ENCODE measurements at regions of chr2 and their contacts with region 1.

Region 1: DNA sequence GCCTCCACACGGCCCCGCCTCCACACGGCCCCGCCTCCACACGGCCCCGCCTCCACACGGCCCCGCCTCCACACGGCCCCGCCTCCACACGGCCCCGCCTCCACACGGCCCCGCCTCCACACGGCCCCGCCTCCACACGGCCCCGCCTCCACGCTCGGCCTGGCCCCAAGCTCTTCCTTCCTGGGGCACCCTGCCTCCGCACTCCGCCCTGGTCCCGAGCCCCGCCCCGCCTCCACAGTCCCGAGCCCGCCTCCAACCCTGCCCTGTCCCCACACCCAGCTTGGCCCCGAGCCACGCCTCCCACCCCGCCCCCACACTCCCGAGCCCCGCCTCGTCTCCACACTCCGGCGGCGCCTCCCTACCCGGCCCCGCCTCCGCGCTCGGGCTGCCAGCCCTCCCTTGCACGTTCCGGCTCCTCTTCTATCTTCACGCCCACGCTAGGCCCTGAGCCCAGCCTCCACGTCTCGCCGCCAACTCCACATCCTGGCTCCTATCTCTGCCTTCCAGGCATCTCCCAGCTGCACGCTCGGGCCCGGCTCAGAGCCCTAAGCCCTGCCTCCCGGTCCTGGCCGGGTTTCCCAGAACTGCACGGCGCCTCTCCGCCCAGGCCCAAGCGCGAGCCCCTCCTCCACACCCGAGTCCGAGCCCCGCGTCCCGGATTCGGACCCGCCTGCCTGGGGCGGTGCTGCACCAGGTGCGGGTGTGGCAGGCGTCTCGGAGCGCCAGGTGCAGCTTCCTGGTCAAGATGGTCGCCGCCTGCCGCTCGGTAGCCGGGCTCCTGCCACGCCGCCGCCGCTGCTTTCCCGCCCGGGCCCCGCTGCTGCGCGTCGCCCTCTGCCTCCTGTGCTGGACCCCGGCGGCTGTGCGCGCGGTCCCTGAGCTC is at the start of gene TMEM87B:
- DNase-seq: peak; percentile 99
- H3K4me3 Mint-ChIP-seq: peak within 1 kb of the TSS; percentile 96
- H3K27ac Mint-ChIP-seq: peak within 1 kb of the TSS; percentile 98
- H3K4me1 Mint-ChIP-seq: peaks cover 39% of the 10 kb centered on the region
- H3K27me3 Mint-ChIP-seq: no peaks in the 10 kb centered on the region
- total RNA-seq, gene TMEM87B: 22.3 to 24.1 TPM

Region 2: DNA sequence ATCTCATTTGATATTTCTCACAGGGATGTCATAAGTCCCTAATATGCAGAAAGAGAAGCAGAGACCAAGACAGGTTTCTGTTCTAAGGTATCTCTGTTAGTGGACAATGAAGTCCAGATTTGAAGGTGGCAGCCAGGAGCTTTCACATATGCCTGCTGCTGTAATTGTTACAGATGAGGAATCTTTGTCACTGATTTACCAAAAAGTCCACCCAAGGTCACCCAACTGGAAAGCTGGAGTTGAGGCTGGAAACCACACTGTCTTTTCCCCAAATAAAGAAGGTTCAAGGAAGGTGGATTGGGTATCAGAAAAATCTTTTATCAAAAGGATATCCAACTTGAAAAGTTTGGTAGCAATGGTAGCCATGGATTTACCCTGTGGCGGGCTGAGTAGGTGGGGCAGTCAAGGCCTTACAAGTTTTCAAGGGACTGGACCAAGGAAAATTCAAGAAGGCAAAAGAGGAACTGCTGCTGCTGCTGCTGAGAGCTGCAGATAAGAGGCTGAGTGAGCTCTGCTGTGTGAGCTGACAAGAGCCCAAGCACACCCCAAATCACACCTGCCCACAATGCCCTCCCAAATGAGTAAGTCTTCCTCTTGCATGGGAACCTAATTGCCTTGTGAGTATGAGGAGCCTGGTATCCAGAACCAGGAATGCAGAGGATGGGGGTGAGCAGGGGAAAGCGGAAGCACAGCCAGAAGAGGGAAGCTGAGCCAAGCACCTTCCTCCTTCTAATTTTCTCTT is 412.3 kb before region 1 on chr2:
- CTCF ChIA-PET with region 1: no interaction called
- POLR2A ChIA-PET with region 1: no interaction called
- intact Hi-C with region 1: no loop called
- DNase-seq: no peak
- H3K4me3 Mint-ChIP-seq: no peak overlapping the region
- H3K27ac Mint-ChIP-seq: no peak overlapping the region
- H3K4me1 Mint-ChIP-seq: peaks cover 4% of the 10 kb centered on the region
- H3K27me3 Mint-ChIP-seq: peaks cover 33% of the 10 kb centered on the region

Region 3: GRCh38 chr2:111883661-111884591 is 171.2 kb before region 1 on chr2 and contains the start of gene ANAPC1:
- CTCF ChIA-PET with region 1: interaction called, 64 read pairs
- POLR2A ChIA-PET with region 1: interaction called, 7 read pairs
- intact Hi-C with region 1: no loop called
- DNase-seq: peak; percentile 90
- H3K4me3 Mint-ChIP-seq: peak within 1 kb of the TSS; percentile 97
- H3K27ac Mint-ChIP-seq: peak within 1 kb of the TSS; percentile 94
- H3K4me1 Mint-ChIP-seq: peaks cover 15% of the 10 kb centered on the region
- H3K27me3 Mint-ChIP-seq: no peaks in the 10 kb centered on the region
- total RNA-seq, gene ANAPC1: 88.8 to 90.2 TPM

Region 4: GRCh38 chr2:112187805-112188596 is 132.9 kb after region 1 on chr2:
- CTCF ChIA-PET with region 1: no interaction called
- POLR2A ChIA-PET with region 1: interaction called, 3 read pairs
- intact Hi-C with region 1: loop called (anchors 2 kb)
- DNase-seq: peak; percentile 91
- H3K4me3 Mint-ChIP-seq: peak overlapping the region; percentile 38
- H3K27ac Mint-ChIP-seq: peak overlapping the region; percentile 94
- H3K4me1 Mint-ChIP-seq: peaks cover 85% of the 10 kb centered on the region
- H3K27me3 Mint-ChIP-seq: no peaks in the 10 kb centered on the region

Region 5: GRCh38 chr2:112275306-112275886 is 220.3 kb after region 1 on chr2 and contains the start of gene ZC3H6:
- CTCF ChIA-PET with region 1: no interaction called
- POLR2A ChIA-PET with region 1: no interaction called
- intact Hi-C with region 1: loop called (anchors 1 kb)
- DNase-seq: peak; percentile 100
- H3K4me3 Mint-ChIP-seq: peak within 1 kb of the TSS; percentile 93
- H3K27ac Mint-ChIP-seq: peak within 1 kb of the TSS; percentile 97
- H3K4me1 Mint-ChIP-seq: peaks cover 17% of the 10 kb centered on the region
- H3K27me3 Mint-ChIP-seq: no peaks in the 10 kb centered on the region
- total RNA-seq, gene ZC3H6: 14.4 to 15.0 TPM

Region 6: GRCh38 chr2:112584134-112584890 is 529.2 kb after region 1 on chr2 and contains the start of gene CHCHD5:
- CTCF ChIA-PET with region 1: no interaction called
- POLR2A ChIA-PET with region 1: no interaction called
- intact Hi-C with region 1: loop called (anchors 1 kb)
- DNase-seq: peak; percentile 97
- H3K4me3 Mint-ChIP-seq: peak within 1 kb of the TSS; percentile 97
- H3K27ac Mint-ChIP-seq: peak within 1 kb of the TSS; percentile 99
- H3K4me1 Mint-ChIP-seq: peaks cover 30% of the 10 kb centered on the region
- H3K27me3 Mint-ChIP-seq: no peaks in the 10 kb centered on the region
- total RNA-seq, gene CHCHD5: 39.3 to 41.4 TPM

Region 7: DNA sequence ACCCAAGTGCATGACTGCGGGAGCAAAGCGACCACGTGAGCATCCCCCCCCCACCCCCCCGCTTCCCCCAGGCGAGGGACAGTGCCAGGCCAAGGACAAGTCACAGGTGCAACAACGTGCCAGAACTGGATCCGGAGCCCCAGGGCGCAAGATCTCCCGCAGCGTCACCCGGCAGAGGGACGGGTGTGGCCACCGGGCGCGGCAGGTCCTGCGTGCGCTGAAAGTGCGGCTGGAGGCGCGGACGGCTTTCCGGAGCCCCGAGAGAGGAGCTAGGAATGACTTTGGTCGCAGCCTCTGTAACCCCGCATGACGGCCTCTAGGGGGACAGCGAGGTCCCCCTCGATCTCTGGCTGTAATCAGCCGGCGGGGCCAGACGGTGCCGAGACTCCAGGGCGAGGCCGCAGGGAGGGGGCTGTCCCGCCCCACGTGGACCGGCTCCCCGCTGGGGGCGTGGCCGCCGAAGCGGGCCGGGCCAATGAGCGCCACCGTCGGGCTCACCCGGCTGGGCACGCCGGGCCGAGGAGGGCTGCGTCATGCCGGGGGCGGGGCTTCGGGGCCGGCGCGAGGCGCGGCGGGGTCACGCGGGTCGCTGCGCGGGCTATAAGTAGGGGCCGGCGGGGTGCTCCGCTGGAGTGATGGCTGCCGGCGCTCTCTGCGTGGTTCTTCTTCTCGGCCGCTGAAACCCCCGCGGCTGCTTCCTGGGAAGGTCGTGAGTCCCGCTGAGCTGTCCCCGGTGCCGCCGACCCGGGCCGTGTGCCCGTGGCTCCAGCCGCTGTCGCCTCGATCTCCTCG is 590.4 kb after region 1 on chr2 and contains the start of gene SLC20A1:
- CTCF ChIA-PET with region 1: no interaction called
- POLR2A ChIA-PET with region 1: no interaction called
- intact Hi-C with region 1: loop called (anchors 5 kb)
- DNase-seq: peak; percentile 98
- H3K4me3 Mint-ChIP-seq: peak within 1 kb of the TSS; percentile 97
- H3K27ac Mint-ChIP-seq: peak within 1 kb of the TSS; percentile 87
- H3K4me1 Mint-ChIP-seq: peaks cover 52% of the 10 kb centered on the region
- H3K27me3 Mint-ChIP-seq: no peaks in the 10 kb centered on the region
- total RNA-seq, gene SLC20A1: 88.8 to 91.3 TPM

Measured in activated CD4-positive, alpha-beta memory T cell treated with anti-CD3 and anti-CD28 coated beads for 36 hours (primary cell).